Activated CD4-positive, alpha-beta T cell treated with anti-CD3 and anti-CD28 coated beads for 36 hours (primary cell): ENCODE measurements at regions of chr2 and their contacts with region 1.

Region 1: DNA sequence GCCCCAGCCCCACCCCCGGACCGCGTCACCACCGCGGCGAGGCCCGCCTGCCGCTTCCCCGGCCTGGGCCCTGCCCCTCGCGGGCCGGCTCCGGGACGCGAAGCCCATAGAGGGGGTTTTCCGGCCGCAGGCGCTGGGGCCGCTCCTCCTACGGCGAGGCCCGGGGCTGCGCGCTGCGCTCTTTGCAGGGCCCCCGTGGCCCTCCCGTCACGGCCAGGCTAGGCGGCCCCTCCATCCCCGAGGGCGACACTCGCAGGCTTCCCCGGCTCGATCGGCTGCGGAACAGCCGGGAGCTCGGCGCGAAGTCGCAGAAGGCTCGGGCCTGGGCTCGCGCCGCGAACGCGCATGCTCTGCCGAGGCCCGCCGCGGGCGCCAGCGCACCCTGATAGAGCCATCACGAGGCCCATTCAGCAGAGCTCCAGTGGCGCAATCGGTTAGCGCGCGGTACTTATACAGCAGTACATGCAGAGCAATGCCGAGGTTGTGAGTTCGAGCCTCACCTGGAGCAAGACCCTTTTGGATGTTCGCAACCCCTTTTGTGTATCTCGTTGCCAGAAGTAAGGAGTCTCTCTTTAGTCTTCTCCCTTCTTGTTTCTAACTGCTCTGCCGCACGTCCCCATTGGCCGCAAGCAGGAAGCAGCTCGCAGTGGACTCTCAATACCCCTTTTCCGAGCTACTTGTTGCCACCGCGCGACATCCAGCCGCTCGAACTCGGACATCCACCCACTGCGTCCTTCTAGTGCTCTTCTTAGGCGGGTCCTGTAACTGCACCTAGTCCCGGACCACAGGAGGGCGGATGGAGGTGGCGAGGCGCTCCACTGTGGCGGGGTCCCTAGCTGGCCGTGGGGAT is 18.0 kb upstream of the HAAO start:
- DNase-seq: peak; percentile 97
- ATAC-seq: peak; percentile 80
- H3K4me3 Mint-ChIP-seq: peak overlapping the region; percentile 94
- H3K27ac Mint-ChIP-seq: peak overlapping the region; percentile 98
- H3K4me1 Mint-ChIP-seq: peaks cover 17% of the 10 kb centered on the region
- H3K27me3 Mint-ChIP-seq: peaks cover 2% of the 10 kb centered on the region

Region 2: GRCh38 chr2:42288811-42289210 is 521.5 kb before region 1 on chr2:
- CTCF ChIA-PET with region 1: no interaction called
- POLR2A ChIA-PET with region 1: no interaction called
- intact Hi-C with region 1: loop called in 1 of 2 experiments (anchors 1 kb)
- DNase-seq: no peak
- ATAC-seq: peak; percentile 49
- H3K4me3 Mint-ChIP-seq: no peak overlapping the region
- H3K27ac Mint-ChIP-seq: peak overlapping the region; percentile 37
- H3K4me1 Mint-ChIP-seq: peaks cover 37% of the 10 kb centered on the region
- H3K27me3 Mint-ChIP-seq: no peaks in the 10 kb centered on the region

Region 3: DNA sequence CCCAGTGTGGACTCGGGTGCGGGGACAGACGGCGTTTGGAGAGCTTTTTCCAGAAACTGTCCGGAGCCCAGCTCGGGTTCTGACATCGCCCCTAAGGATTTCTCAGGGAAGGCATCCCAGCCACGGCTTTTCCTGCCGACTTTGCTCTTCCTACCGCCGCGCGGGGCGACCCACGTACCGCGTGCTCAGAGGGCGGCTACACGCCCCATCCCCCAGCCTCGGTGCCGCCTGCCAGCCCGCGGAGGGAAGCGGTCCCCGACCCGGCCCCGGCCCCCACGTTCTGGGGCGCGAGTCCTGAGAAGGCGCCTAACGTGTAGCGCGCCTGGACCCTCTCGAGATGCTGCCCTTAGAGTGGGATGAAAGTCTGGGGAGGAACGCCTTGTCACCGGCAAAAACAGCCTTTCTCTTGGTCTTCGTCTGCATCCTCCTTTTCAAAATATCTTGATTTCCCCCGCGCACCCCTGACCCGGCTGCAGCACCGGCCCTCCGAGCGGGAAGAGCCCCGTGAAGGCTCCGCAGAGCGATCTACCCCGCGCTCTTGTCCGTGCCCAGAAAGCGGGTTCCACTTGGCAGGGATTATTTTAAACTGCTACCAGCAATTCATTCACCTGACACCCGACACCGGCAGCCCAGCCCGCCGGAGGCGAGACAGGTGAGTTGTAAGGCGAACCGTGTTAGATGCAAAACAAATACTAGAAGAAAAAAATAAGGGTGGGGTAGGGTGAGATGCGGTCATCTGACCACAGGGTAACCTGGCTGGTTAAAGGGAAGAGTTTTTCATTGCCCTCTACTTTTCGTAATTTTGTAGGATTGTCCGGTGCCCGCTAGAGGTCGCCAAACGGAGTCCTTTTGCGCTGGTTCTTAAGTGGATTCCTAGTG is 315.8 kb before region 1 on chr2:
- CTCF ChIA-PET with region 1: interaction called, 6 read pairs
- POLR2A ChIA-PET with region 1: interaction called, 3 read pairs
- intact Hi-C with region 1: loop called (anchors 1 to 2 kb)
- DNase-seq: peak; percentile 89
- ATAC-seq: peak; percentile 59
- H3K4me3 Mint-ChIP-seq: peak overlapping the region; percentile 80
- H3K27ac Mint-ChIP-seq: peak overlapping the region; percentile 81
- H3K4me1 Mint-ChIP-seq: peaks cover 17% of the 10 kb centered on the region
- H3K27me3 Mint-ChIP-seq: peaks cover 8% of the 10 kb centered on the region

Region 4: GRCh38 chr2:42792583-42793333 is 17.6 kb before region 1 on chr2 and contains the start of gene HAAO:
- CTCF ChIA-PET with region 1: interaction called, 16 read pairs
- POLR2A ChIA-PET with region 1: interaction called, 8 read pairs
- intact Hi-C with region 1: no loop called
- DNase-seq: peak; percentile 30
- ATAC-seq: peak; percentile 50
- H3K4me3 Mint-ChIP-seq: peak within 1 kb of the TSS; percentile 70
- H3K27ac Mint-ChIP-seq: peak within 1 kb of the TSS; percentile 66
- H3K4me1 Mint-ChIP-seq: peaks cover 37% of the 10 kb centered on the region
- H3K27me3 Mint-ChIP-seq: peaks cover 39% of the 10 kb centered on the region
- total RNA-seq, gene HAAO: 0.86 to 1.2 TPM

Region 5: DNA sequence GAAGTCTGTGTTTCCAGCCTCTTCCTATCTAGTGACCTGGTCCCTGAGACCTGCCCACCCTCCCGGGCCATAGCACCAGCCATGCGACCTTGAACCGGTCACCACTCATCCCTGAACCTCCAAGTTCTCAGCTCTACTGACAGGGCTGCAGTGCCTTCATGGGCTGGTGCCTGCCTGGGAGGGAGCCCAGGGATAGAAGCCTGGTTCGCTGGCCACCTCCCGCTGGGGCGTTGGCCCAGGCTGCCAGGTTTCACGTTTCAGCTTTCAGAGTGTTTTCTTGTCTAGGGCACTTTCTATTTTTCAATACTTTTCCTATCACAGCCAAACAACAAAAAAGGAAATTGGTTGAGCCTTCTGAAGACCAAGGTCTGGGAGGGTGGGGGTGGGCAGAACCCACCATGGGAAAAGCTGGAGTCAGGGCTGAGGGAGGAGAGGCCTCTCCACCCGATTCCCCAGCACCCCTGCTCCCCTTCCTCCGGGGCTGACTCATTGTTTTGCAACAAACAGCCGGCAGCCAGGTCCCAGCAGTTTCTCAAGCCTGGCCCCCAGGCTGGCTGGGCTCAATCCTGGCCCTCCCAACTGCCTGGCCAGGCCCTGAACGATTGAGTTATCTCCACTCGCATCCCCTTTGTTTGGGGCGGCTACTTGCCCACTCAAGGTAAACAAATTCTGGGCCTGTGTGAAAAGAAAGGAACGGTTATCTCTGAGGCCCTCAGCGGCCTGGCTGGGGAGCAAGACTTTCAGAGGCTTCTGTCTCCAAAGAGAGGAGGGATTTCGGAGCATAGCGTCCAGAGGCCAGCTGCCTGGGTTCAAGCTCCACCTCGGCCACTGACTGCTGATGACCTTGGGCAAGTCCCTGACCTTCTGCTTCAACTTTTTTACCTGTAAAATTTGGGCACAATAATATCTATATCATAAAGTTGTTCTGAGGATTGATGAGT is 368.5 kb after region 1 on chr2:
- CTCF ChIA-PET with region 1: no interaction called
- POLR2A ChIA-PET with region 1: interaction called, 3 read pairs
- intact Hi-C with region 1: loop called in 1 of 2 experiments (anchors 1 kb)
- DNase-seq: peak; percentile 57
- ATAC-seq: peak; percentile 10
- H3K4me3 Mint-ChIP-seq: peak overlapping the region; percentile 16
- H3K27ac Mint-ChIP-seq: peak overlapping the region; percentile 90
- H3K4me1 Mint-ChIP-seq: peaks cover 69% of the 10 kb centered on the region
- H3K27me3 Mint-ChIP-seq: no peaks in the 10 kb centered on the region

Region 6: DNA sequence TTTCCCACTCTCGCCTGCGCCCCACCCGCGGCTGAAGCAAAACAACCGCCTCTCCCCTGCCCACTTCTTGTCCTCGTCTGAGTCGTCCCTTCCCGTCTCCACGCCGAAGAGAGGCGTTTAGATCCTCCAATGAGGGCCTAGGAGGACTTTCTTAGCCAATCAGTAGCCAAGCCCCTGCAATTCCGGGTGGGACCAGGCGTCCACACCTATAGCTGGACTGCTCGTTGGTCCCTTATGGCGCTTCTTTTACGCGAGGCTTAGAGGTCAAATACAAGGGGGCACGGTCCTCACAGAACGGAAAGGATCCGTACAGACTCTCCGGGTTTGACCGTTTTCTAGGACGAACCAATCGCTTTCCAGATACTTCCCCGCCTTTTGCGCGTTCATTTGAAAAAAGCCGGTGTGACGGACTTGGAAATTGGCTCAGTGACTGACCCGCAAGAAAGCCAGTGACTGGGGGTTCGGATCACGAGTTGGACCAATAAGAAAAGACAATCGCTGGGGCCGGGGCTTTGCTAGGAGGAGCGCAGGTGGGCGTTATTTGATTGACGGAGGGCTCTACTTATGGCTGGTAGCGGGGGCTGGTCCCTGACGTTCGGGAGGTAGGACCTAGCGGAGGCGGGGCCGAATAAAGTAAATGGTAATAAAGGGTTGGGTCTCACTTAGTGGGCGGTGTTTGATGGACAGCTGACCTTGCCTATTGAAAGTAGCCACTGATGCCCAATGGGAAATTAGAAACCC is 1357.8 kb after region 1 on chr2:
- CTCF ChIA-PET with region 1: no interaction called
- POLR2A ChIA-PET with region 1: no interaction called
- intact Hi-C with region 1: loop called in 1 of 2 experiments (anchors 5 kb)
- DNase-seq: peak; percentile 98
- ATAC-seq: peak; percentile 81
- H3K4me3 Mint-ChIP-seq: peak overlapping the region; percentile 94
- H3K27ac Mint-ChIP-seq: peak overlapping the region; percentile 94
- H3K4me1 Mint-ChIP-seq: peaks cover 29% of the 10 kb centered on the region
- H3K27me3 Mint-ChIP-seq: no peaks in the 10 kb centered on the region